Sigmoid colon (tissue), 7 donors: ENCODE measurements at regions of chr10 and their contacts with region 1.

Region 1: GRCh38 chr10:43606322-43607198 is at the start of gene ZNF485:
- DNase-seq: peak; percentile 81
- H3K4me3 ChIP-seq: peak within 1 kb of the TSS; percentile 68 to 92 (median 85)
- H3K27ac ChIP-seq: peak within 1 kb of the TSS; percentile 62 to 77 (median 69)
- H3K4me1 ChIP-seq: peaks cover 0 to 13% (median 8%) of the 10 kb centered on the region in 4 donors
- H3K27me3 ChIP-seq: no peaks in the 10 kb centered on the region
- CTCF ChIP-seq: no peak
- EP300 ChIP-seq: no peak
- POLR2A ChIP-seq: no peak
- total RNA-seq, gene ZNF485: 2.2 to 3.8 (median 2.9) TPM

Region 2: GRCh38 chr10:43574001-43574892 is 32.3 kb before region 1 on chr10 and contains the start of gene ZNF239:
- intact Hi-C with region 1: loop called (anchors 5 kb)
- DNase-seq: peak; percentile 95
- H3K4me3 ChIP-seq: peak within 1 kb of the TSS; percentile 54 to 69 (median 64)
- H3K27ac ChIP-seq: peak within 1 kb of the TSS; percentile 68 to 81 (median 74)
- H3K4me1 ChIP-seq: peaks cover 0 to 19% (median 13%) of the 10 kb centered on the region in 4 donors
- H3K27me3 ChIP-seq: no peaks in the 10 kb centered on the region
- CTCF ChIP-seq: no peak
- EP300 ChIP-seq: no peak
- POLR2A ChIP-seq: no peak
- total RNA-seq, gene ZNF239: 4.1 to 6.2 (median 5.4) TPM

Region 3: GRCh38 chr10:43640603-43641002 is 34.0 kb after region 1 on chr10:
- intact Hi-C with region 1: no loop called
- DNase-seq: no peak
- H3K4me3 ChIP-seq: no peak overlapping the region
- H3K27ac ChIP-seq: no peak overlapping the region
- H3K4me1 ChIP-seq: no peaks in the 10 kb centered on the region
- H3K27me3 ChIP-seq: no peaks in the 10 kb centered on the region
- CTCF ChIP-seq: no peak
- EP300 ChIP-seq: no peak
- POLR2A ChIP-seq: no peak